GM10248 (cell line): ENCODE measurements at regions of chr7 and their contacts with region 1.

Region 1: GRCh38 chr7:26376175-26376917 is 84.7 kb downstream of the SNX10 start:
- DNase-seq: peak; percentile 36
- CTCF ChIP-seq: no peak

Region 2: GRCh38 chr7:26388256-26388655 is 11.9 kb after region 1 on chr7:
- CTCF ChIA-PET with region 1: interaction called, 26 read pairs
- POLR2A ChIA-PET with region 1: no interaction called
- DNase-seq: peak; percentile 32
- CTCF ChIP-seq: no peak

Region 3: DNA sequence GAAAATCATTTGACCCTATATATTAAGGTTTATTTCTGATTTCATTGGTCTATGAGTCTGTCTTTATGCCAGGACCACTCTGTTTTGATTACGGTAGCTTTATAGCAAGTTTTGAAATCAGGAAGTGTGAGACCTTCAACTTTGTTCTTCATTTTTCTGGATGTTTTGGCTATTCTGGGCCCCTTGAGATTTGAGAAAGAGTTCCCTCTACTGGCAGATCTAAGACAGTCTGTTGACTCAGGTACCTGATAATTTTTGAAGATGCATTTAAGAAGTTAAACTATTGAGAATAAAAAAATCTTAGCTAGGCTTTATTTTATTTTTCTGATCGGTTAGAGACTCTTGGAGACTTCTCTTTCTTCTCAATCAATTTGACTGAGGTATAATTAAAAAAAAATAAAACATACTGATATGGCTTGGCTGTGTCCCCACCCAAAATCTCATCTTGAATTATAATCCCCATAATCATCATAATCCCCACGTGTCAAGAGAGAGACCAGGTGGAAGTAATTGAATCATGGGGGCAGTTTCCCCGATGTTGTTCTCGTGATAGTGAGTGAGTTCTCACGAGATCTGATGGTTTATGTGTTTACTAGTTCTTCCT is 124.5 kb after region 1 on chr7:
- CTCF ChIA-PET with region 1: interaction called, 17 read pairs
- POLR2A ChIA-PET with region 1: no interaction called
- DNase-seq: peak; percentile 59
- CTCF ChIP-seq: peak; percentile 50

Region 4: DNA sequence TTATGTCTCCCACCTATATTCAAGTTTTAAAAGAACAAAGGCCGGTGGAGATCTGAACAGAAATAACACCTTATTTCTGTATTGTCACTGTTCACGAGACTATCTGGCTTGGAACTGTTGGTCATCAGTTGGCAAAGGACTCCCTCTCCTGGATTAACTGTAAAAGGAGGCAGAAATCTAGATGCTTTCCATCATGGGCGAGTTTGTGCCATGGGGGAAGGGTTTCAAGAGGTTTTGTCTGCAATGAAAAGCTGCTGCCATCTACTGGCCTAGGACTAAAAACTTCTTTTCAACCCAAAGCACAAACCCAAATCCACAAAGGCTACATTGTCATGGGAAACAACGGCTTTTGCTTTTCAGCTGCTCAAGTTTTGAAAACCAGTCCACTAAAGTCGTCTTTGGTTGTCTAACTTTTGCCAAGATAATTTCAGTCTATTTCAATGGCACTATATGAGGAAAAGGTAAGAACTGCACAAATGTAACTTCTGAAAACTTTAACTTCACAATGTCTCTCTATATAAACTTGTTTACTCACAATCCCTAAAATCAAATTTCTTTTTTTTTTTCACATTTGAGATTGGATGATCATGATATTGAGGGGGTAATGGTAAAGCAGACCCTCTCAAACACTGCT is 291.3 kb after region 1 on chr7:
- CTCF ChIA-PET with region 1: interaction called, 11 read pairs
- POLR2A ChIA-PET with region 1: no interaction called
- DNase-seq: peak; percentile 37
- CTCF ChIP-seq: peak; percentile 69